GM13977 (cell line): ENCODE measurements at regions of chr6 and their contacts with region 1.

Region 1: GRCh38 chr6:30915591-30915946 is 1.5 kb downstream of the VARS2 start:
- DNase-seq: peak; percentile 88
- CTCF ChIP-seq: peak; percentile 69

Region 2: DNA sequence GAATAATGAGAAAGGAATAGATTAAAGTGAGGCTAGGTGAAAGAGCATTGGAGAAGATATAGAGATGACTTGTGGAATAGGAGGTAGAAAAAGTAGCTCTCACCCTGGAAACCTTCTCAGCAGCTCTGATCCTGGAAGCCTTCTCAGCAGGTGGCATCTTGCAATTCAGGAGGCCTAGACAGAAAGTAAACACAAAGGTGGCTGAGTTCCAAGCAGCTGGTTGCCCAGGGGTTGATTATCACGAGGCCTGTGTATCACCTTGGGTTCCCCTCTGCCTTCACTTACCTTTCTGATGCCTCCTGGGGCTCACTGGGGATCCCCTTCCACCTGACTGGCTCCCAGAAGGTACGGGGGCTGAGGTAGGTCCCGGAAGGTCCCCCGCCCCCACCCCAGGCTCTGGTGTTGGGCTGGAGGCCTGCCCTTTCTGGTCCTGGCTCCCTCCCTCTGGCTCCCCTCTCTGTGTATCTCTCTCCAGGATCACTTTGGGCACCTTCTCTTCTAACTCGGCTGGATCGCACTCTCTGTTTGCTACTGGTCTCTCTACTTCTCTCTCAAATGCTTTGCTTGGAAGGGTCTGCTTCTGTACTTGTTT is 208.2 kb before region 1 on chr6:
- in situ Hi-C with region 1: no loop called
- DNase-seq: no peak
- CTCF ChIP-seq: no peak

Region 3: DNA sequence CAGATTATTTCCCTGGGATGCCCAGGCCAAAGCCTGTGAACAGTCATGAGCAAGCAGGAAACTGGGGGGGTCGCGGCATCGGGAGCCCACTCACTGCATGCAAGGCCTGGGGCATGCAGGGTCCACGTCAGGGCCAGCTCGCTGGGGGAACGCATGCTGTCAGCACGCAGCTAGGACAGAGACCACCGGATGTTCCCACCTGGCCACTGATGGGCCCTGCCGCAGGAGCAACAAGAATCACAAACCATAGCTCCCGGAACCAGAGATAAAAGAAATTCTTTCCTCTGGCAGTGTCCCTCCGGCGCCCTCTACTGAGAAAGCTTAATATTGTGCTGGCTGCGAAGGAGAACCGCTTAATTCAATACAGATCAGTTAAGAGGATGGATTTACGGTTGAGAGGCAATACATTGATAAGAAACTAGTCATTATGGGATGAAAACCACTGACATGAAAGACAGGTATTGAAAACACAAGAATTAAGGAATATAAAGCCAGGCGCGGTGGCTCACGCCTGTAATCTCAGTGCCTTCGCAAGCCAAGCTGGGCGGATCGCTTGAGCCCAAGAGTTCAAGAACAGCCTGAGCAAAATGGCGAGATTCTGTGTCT is 164.2 kb after region 1 on chr6:
- in situ Hi-C with region 1: loop called (anchors 5 kb)
- DNase-seq: peak; percentile 65
- CTCF ChIP-seq: peak; percentile 85